Heart left ventricle (tissue), 16 donors: ENCODE measurements at regions of chr1 and their contacts with region 1.

Region 1: GRCh38 chr1:93021539-93022134 is 57.4 kb upstream of the MTF2 start:
- DNase-seq: no peak
- ATAC-seq: peak in 1 of 4 donors; percentile 52
- H3K4me3 ChIP-seq: no peak overlapping the region
- H3K27ac ChIP-seq: no peak overlapping the region
- H3K4me1 ChIP-seq: peaks cover 0 to 6% (median 0%) of the 10 kb centered on the region in 12 donors
- H3K27me3 ChIP-seq: peaks cover 0 to 3% (median 0%) of the 10 kb centered on the region in 9 donors
- CTCF ChIP-seq: peak; percentile 51 to 77 (median 69)
- POLR2A ChIP-seq: no peak

Region 2: GRCh38 chr1:93061895-93062792 is 40.5 kb after region 1 on chr1:
- intact Hi-C with region 1: loop called in 1 of 10 experiments (anchors 5 kb)
- DNase-seq: no peak
- ATAC-seq: peak in 2 of 4 donors; percentile 49 to 57
- H3K4me3 ChIP-seq: no peak overlapping the region
- H3K27ac ChIP-seq: no peak overlapping the region
- H3K4me1 ChIP-seq: no peaks in the 10 kb centered on the region
- H3K27me3 ChIP-seq: peaks cover 0 to 4% (median 0%) of the 10 kb centered on the region in 9 donors
- CTCF ChIP-seq: peak in 11 of 12 donors; percentile 24 to 56 (median 47)
- POLR2A ChIP-seq: no peak